ENCODE measurements at regions of chr21 and their contacts with region 1.

Region 1: DNA sequence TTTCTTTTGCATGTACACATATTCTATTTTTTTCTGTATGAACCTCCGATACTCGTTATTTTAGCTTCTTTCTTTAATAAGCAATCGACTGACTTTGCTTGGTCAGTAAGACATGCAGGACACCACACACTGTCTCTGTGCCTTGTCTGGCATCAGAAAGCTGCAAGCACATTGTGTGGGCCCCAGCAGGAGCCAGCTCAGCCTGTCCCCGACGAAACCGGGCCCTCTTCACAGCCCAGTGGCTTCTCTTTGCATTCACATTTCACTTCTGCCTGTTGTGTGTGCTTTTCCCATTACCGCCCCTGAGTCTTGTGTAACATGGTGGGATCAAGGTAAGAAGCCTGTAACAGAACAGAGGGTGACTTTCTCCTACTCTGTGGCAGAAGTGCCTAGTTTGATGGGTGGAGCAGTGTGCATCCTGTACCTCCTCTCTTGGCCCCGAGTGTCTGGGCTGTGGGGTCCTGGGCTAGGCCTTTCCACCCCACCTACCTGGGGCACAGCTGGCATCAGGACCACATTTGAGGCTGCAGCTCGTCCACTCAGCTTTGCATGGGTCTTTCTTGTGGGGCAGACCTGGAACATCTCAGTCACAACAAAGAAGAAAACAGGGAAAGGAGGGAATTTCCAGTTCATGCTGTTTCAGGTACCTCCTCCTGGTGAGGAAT is 118.9 kb upstream of the COL6A1 start:
- DNase-seq: no peak
- H3K4me3 Mint-ChIP-seq: no peak overlapping the region
- H3K27ac Mint-ChIP-seq: no peak overlapping the region
- H3K4me1 Mint-ChIP-seq: no peaks in the 10 kb centered on the region
- H3K27me3 Mint-ChIP-seq: no peaks in the 10 kb centered on the region

Region 2: GRCh38 chr21:45655124-45655523 is 207.6 kb before region 1 on chr21:
- CTCF ChIA-PET with region 1: no interaction called
- POLR2A ChIA-PET with region 1: no interaction called
- intact Hi-C with region 1: no loop called
- DNase-seq: no peak
- H3K4me3 Mint-ChIP-seq: no peak overlapping the region
- H3K27ac Mint-ChIP-seq: no peak overlapping the region
- H3K4me1 Mint-ChIP-seq: peaks cover 3% of the 10 kb centered on the region
- H3K27me3 Mint-ChIP-seq: peaks cover 3% of the 10 kb centered on the region

Region 3: DNA sequence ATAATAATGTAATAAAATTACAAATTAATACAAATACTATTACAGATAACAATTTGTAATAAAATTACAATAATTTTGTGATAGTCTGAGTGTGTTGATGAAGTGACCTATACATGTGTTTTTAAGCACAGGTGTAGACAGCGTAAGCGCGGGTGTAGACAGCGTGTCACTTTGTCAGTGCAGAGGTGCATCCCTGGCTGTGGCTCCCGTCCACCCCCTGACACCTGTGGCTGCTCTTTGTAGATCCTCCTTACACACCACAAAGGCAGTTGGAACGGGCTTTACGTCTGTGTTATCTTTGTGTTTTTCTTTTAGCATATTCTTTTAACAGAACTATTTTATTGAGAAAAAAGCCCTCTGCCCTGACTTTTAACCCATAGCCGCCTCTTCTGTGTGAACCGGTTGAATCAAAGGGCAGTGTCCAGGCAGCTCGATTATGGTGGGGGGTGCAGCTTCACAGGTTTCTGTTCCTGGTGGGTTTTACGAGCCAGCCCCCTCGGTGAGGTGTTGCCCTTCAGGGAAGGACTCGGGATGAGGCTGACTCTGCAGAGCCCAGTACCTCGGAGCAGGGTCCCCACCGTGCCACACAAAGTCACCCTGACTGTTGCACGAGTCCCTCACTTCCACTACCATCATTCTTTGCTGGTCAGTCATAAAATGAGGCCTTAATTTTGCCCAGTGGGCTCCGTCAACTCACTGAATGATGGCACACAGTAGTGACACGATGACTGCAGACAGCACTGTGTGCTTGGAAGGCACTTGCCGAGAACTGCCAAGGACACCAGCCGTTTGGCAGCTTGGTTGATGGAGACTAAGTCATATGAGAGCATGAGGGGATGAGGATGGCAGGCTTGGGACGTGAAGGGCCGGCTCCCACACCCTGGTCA is 32.5 kb after region 1 on chr21:
- CTCF ChIA-PET with region 1: no interaction called
- POLR2A ChIA-PET with region 1: no interaction called
- intact Hi-C with region 1: loop called (anchors 1 kb)
- DNase-seq: no peak
- H3K4me3 Mint-ChIP-seq: no peak overlapping the region
- H3K27ac Mint-ChIP-seq: no peak overlapping the region
- H3K4me1 Mint-ChIP-seq: peaks cover 37% of the 10 kb centered on the region
- H3K27me3 Mint-ChIP-seq: no peaks in the 10 kb centered on the region